Ovary (tissue), 10 donors: ENCODE measurements at regions of chr1 and their contacts with region 1.

Region 1: DNA sequence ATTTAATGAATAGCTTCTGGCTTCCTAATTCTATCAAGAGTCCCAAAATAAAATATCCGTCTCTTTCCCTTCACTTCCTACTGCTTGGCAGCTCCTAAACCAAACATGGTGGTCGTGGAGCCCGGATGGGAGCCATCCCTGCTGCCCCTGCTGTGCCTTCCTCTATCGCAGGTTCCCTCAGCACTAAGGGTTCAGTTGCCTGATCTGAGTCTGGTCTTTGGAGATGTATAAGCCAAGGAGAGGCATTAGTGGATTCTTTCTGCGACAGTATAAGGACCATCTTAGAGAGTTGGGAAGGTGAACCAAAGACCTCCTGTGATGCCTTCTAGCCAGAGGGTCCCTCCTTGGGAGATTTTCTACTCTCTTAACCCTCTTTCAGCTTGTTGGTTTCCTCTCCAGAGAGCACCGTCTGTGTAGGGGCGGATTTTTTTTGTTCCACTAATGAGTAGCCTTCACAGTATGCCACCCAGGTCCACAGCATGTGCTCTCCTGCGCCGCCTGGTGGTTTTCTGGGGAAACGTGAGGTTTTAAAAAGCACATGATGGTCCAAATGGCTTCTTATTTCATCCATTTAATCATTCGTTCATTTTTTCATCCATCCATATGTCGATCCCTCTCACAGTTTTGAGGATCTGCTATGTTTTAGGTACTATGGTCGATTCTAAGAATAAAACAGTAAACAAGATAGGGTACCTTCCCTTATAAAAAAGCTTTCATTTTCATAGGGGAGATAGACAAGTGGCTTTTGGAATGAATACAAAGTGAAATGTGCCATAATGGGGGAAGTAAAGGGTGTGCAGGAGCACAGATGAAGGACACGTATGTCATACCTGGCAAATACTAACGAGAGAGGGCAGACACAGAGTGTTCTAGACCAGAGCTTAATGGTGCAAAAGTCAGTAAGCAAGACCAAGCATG is 71.0 kb downstream of the NFASC start:
- DNase-seq: peak; percentile 47 to 83 (median 82)
- H3K4me3 ChIP-seq: no peak overlapping the region
- H3K27ac ChIP-seq: no peak overlapping the region
- H3K4me1 ChIP-seq: peaks cover 3% of the 10 kb centered on the region
- H3K27me3 ChIP-seq: no peaks in the 10 kb centered on the region
- CTCF ChIP-seq: peak; percentile 88 to 93 (median 93)
- EP300 ChIP-seq: no peak
- POLR2A ChIP-seq: no peak

Region 2: DNA sequence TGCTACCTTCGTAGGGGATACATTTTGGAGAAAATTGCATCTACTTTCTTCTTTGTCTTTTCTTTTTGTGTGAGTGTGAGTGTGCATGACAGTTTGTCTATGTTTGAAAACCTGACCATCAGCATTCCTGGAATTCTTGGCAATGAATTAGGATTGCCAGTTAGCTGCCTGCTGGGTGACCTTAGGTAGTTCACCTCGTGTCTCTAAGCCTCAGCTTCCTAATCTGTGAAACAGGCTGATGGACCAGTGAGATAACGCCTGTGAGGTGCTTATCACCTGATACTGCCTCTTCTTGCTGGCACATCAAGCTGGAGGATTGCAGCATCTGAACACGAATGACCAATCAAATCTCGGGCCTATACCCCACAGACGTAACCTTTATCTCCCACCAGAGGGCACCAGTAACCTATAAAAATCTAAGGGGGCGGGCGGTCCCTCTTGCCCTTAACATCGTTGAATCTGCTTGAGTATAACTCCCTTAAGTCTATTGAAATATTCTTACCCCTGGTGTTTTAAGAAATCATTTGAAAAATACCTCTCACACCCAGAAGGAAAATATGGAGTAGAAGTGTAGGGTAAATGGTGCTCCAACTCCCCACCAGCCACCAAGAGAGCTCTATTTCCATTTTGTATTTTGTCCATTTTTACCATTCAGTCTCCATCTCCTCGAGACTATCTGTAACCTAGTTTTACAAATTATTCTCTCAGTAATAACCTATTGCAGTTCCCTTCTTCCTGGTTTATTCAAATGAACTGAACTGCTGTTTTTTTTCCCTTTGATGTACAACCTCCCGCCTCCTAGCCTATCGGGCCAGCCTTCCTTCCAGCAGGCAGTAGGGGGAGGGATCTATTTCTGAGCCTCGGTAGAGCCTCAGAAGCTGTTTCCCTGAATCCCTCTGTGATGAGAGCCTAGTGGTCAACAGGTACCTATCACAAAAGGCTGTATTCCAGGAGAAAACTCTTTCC is 375.8 kb before region 1 on chr1:
- intact Hi-C with region 1: loop called in 1 of 4 experiments (anchors 10 kb)
- DNase-seq: peak in 3 of 5 donors; percentile 32 to 53 (median 44)
- H3K4me3 ChIP-seq: no peak overlapping the region
- H3K27ac ChIP-seq: no peak overlapping the region
- H3K4me1 ChIP-seq: no peaks in the 10 kb centered on the region
- H3K27me3 ChIP-seq: no peaks in the 10 kb centered on the region
- CTCF ChIP-seq: peak; percentile 15 to 72 (median 56)
- EP300 ChIP-seq: no peak
- POLR2A ChIP-seq: no peak

Region 3: DNA sequence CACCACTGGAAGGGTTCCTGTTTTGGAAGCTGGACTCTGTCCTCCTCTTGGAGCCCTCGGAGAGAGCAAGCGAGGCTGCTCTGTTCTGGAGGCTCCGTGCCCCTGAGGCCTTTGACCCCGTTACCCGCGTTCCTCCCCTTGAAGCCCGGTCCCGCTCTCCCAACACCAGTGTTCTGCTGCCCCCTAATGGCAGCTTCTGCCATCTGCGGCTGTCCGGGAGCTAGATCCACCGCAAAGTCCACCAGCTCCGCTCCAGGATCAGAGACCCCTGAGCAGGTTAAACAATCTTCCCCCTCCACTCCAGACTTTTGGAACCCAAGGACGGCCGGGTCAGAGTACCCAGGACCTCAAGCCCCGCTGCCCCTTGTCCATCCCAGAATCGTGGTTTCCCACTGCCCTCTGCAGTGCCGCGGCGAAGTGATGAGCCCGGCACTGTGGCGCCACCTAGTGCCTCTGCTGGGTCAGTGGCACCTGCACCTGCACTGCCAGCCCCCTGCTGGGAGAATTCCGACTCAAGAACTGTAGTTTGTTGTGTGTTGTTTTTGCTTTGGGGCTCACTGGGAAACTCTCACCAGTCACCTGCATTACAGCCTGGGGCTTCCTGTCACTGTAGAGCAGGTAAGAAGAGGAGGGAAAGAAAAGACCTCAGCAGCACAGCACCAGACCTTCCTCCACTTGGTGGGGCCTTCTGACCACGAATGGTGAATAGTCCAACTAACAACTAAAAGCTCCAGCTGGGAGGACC is 134.6 kb before region 1 on chr1:
- intact Hi-C with region 1: loop called (anchors 2 to 10 kb)
- DNase-seq: peak; percentile 77 to 87 (median 83)
- H3K4me3 ChIP-seq: peak overlapping the region; percentile 27
- H3K27ac ChIP-seq: no peak overlapping the region
- H3K4me1 ChIP-seq: peaks cover 1% of the 10 kb centered on the region
- H3K27me3 ChIP-seq: no peaks in the 10 kb centered on the region
- CTCF ChIP-seq: peak; percentile 87 to 98 (median 95)
- EP300 ChIP-seq: no peak
- POLR2A ChIP-seq: no peak

Region 4: GRCh38 chr1:204814181-204814884 is 127.3 kb before region 1 on chr1:
- intact Hi-C with region 1: loop called in 3 of 4 experiments (anchors 5 to 10 kb)
- DNase-seq: no peak
- H3K4me3 ChIP-seq: no peak overlapping the region
- H3K27ac ChIP-seq: no peak overlapping the region
- H3K4me1 ChIP-seq: peaks cover 4% of the 10 kb centered on the region
- H3K27me3 ChIP-seq: no peaks in the 10 kb centered on the region
- CTCF ChIP-seq: no peak
- EP300 ChIP-seq: no peak
- POLR2A ChIP-seq: no peak

Region 5: DNA sequence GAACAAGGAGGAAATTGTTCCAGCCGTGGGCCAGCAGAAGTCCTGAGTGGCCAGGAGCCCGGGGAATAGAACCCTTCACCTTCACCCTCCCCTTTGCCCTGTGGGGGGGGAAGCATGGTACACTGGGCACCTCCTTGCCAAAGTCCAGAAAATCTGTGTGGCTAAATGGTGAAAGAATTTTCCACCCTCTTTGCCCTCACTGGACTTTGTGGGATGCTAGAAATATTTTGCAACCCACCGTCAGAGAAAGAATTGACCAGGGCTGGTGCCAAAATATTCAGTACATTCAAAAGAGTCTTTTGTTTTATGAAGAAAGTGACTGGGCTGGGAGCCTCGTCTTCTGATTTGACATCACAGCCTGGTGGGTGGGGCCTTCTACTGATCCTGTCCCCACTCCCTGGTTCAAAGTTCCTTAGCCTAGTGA is 56.4 kb before region 1 on chr1:
- intact Hi-C with region 1: loop called in 1 of 4 experiments (anchors 5 kb)
- DNase-seq: peak in 2 of 5 donors; percentile 25 to 61
- H3K4me3 ChIP-seq: no peak overlapping the region
- H3K27ac ChIP-seq: peak overlapping the region in 1 of 2 donors; percentile 3
- H3K4me1 ChIP-seq: peaks cover 33% of the 10 kb centered on the region
- H3K27me3 ChIP-seq: no peaks in the 10 kb centered on the region
- CTCF ChIP-seq: no peak
- EP300 ChIP-seq: no peak
- POLR2A ChIP-seq: no peak

Region 6: GRCh38 chr1:204896787-204897469 is 44.8 kb before region 1 on chr1:
- intact Hi-C with region 1: loop called in 1 of 4 experiments (anchors 2 kb)
- DNase-seq: no peak
- H3K4me3 ChIP-seq: no peak overlapping the region
- H3K27ac ChIP-seq: no peak overlapping the region
- H3K4me1 ChIP-seq: peaks cover 13% of the 10 kb centered on the region
- H3K27me3 ChIP-seq: no peaks in the 10 kb centered on the region
- CTCF ChIP-seq: no peak
- EP300 ChIP-seq: no peak
- POLR2A ChIP-seq: no peak

Region 7: DNA sequence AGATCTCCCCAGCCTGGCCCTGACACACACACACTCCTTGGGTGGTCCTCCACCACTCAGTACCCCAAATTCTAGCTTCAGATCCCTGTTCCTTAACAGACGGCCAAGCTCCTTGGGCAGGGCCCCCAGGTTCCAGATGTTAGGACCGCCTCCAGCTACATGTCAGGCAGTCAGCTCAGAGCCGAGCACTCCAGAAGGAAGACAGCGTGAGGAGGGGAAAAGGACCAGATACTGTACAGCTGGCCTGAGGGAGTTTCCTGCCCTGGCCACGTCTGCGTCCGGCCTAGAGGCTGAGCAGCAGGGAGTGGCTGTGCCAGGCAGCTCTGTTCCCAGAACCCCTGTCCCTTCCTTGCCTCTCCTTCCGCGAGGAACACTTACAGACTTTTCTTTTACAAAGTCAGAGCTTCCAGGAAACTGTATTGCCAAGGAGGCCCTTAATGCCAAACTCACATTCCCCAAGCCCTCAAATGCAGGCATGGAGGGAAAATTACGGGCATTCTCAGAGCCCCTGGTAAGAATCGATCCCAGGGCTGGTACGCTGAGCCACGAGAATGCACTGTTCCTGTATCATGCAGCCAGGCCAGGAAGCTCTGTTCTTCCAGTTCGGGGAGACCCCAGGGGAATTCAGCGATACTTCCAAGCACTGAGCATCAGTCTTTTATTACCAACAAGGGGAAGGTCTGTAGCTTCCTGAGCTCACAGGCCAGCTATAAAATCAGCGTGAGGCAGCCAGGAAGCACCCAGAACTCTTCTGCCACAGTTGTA is 56.1 kb after region 1 on chr1:
- intact Hi-C with region 1: no loop called
- DNase-seq: no peak
- H3K4me3 ChIP-seq: no peak overlapping the region
- H3K27ac ChIP-seq: peak overlapping the region in 1 of 2 donors; percentile 4
- H3K4me1 ChIP-seq: no peaks in the 10 kb centered on the region
- H3K27me3 ChIP-seq: no peaks in the 10 kb centered on the region
- CTCF ChIP-seq: no peak
- EP300 ChIP-seq: no peak
- POLR2A ChIP-seq: no peak

Region 8: GRCh38 chr1:205171369-205171768 is 229.7 kb after region 1 on chr1:
- intact Hi-C with region 1: no loop called
- DNase-seq: no peak
- H3K4me3 ChIP-seq: no peak overlapping the region
- H3K27ac ChIP-seq: no peak overlapping the region
- H3K4me1 ChIP-seq: peaks cover 4% of the 10 kb centered on the region
- H3K27me3 ChIP-seq: no peaks in the 10 kb centered on the region
- CTCF ChIP-seq: no peak
- EP300 ChIP-seq: no peak
- POLR2A ChIP-seq: no peak